Vagina (tissue), 2 donors: ENCODE measurements at regions of chr4 and their contacts with region 1.

Region 1: GRCh38 chr4:68630373-68630772 is 40.1 kb downstream of the UGT2B15 start:
- DNase-seq: no peak
- H3K4me3 ChIP-seq: no peak overlapping the region
- H3K27ac ChIP-seq: no peak overlapping the region
- H3K4me1 ChIP-seq: no peaks in the 10 kb centered on the region
- H3K27me3 ChIP-seq: no peaks in the 10 kb centered on the region
- CTCF ChIP-seq: no peak
- POLR2A ChIP-seq: no peak

Region 2: GRCh38 chr4:67054896-67055295 is 1575.5 kb before region 1 on chr4:
- intact Hi-C with region 1: no loop called
- DNase-seq: no peak
- H3K4me3 ChIP-seq: no peak overlapping the region
- H3K27ac ChIP-seq: no peak overlapping the region
- H3K4me1 ChIP-seq: no peaks in the 10 kb centered on the region
- H3K27me3 ChIP-seq: no peaks in the 10 kb centered on the region
- CTCF ChIP-seq: no peak
- POLR2A ChIP-seq: no peak

Region 3: DNA sequence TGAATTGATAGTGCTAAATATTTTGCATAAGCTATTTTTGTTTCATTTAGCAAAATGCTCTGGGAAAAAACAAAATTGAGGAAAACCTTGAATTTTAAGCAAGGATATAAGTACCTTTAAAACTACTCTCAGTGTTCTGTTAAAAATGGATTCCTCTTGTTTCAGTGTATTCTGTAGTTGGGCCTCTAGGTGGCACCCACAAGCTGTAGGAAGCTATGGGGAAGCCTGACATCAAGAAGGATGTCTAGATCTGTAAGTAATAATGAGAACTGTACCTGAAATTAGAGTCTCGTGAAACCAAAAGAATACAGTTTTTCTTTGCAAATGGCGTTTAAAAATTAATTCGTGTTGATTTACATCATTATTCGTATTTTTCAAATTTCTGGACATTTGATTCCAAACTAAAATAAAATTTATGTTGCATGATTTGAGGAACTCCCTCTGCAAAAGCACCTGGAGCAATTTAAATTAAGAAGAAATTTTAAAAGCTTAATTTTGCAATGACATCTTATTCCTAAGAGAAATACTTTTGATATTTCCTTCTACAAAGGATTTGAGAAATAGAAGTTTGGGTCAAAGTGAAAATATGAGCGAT is 131.9 kb before region 1 on chr4:
- intact Hi-C with region 1: loop called (anchors 10 kb)
- DNase-seq: no peak
- H3K4me3 ChIP-seq: no peak overlapping the region
- H3K27ac ChIP-seq: no peak overlapping the region
- H3K4me1 ChIP-seq: no peaks in the 10 kb centered on the region
- H3K27me3 ChIP-seq: no peaks in the 10 kb centered on the region
- CTCF ChIP-seq: peak; percentile 36 to 49 (median 37)
- POLR2A ChIP-seq: no peak

Region 4: DNA sequence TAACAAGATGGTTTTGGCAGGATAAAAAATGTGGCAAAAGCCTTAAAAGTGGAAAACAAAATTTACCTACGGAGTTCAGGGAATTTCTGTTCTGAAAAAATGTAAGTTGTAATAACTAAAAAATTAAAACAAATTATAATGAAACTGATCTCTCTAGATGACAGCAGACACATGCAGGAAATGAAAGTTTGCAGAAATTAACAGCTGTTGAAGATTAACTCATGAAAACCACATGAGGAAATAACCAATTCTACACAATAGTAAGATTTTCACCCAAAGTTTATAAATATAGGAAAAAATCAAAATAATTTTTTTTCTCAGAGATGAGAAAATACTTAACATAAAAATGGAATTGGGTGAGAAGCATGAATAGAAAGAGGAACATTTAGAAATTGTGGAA is 87.6 kb after region 1 on chr4:
- intact Hi-C with region 1: no loop called
- DNase-seq: no peak
- H3K4me3 ChIP-seq: no peak overlapping the region
- H3K27ac ChIP-seq: no peak overlapping the region
- H3K4me1 ChIP-seq: no peaks in the 10 kb centered on the region
- H3K27me3 ChIP-seq: no peaks in the 10 kb centered on the region
- CTCF ChIP-seq: no peak
- POLR2A ChIP-seq: no peak